Transverse colon (tissue), 4 donors: ENCODE measurements at regions of chr2 and their contacts with region 1.

Region 1: DNA sequence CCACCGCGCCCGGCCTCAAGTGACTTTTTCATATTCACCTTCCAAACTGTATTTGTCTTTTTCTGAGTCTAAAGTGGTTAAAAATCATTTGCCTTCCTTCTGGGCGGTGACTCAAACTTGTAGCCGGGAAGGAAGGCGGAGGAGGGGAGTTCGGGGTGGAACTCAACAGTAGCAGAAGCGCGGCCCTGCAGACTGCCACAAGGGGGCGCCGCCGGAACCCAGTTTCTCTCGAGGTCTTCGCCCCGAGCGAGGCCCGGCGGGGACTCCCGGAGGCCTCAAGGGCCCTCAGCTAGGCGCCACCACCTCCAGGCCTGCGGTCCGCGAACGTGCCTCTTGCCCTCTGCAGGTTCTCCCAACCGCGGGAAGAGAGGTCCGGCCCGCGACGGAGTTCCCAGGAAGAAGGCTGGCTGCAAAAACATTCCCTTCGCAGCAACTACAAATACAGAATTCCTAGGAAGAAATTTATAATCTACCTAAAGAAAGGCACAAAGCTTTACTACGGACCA is 16.8 kb upstream of the ITM2C start:
- DNase-seq: peak; percentile 95
- H3K4me3 ChIP-seq: peak overlapping the region in 1 of 4 donors; percentile 8
- H3K27ac ChIP-seq: peak overlapping the region in 1 of 4 donors; percentile 28
- H3K4me1 ChIP-seq: peaks cover 0 to 12% (median 7%) of the 10 kb centered on the region in 4 donors
- H3K27me3 ChIP-seq: peaks cover 7% of the 10 kb centered on the region
- CTCF ChIP-seq: peak; percentile 89 to 94 (median 91)
- EP300 ChIP-seq: no peak
- POLR2A ChIP-seq: no peak

Region 2: GRCh38 chr2:230902180-230902899 is 54.4 kb after region 1 on chr2:
- in situ Hi-C with region 1: loop called in 1 of 4 experiments (anchors 10 kb)
- intact Hi-C with region 1: no loop called
- DNase-seq: peak; percentile 50
- H3K4me3 ChIP-seq: no peak overlapping the region
- H3K27ac ChIP-seq: no peak overlapping the region
- H3K4me1 ChIP-seq: no peaks in the 10 kb centered on the region
- H3K27me3 ChIP-seq: no peaks in the 10 kb centered on the region
- CTCF ChIP-seq: peak; percentile 34 to 70 (median 61)
- EP300 ChIP-seq: no peak
- POLR2A ChIP-seq: no peak

Region 3: GRCh38 chr2:231270221-231271114 is 422.5 kb after region 1 on chr2:
- in situ Hi-C with region 1: no loop called
- intact Hi-C with region 1: no loop called
- DNase-seq: no peak
- H3K4me3 ChIP-seq: no peak overlapping the region
- H3K27ac ChIP-seq: peak overlapping the region; percentile 7 to 87 (median 69)
- H3K4me1 ChIP-seq: peaks cover 0 to 9% (median 3%) of the 10 kb centered on the region in 4 donors
- H3K27me3 ChIP-seq: no peaks in the 10 kb centered on the region
- CTCF ChIP-seq: no peak
- EP300 ChIP-seq: peak; percentile 66
- POLR2A ChIP-seq: no peak